Kidney (tissue), 22 donors: ENCODE measurements at regions of chr9 and their contacts with region 1.

Region 1: GRCh38 chr9:5892456-5893133 is 1.9 kb downstream of the MLANA start:
- DNase-seq: peak in 3 of 5 donors; percentile 65 to 87 (median 86)
- H3K4me3 ChIP-seq: no peak overlapping the region
- H3K27ac ChIP-seq: no peak overlapping the region
- H3K4me1 ChIP-seq: peaks cover 0 to 3% (median 0%) of the 10 kb centered on the region in 3 donors
- H3K27me3 ChIP-seq: no peaks in the 10 kb centered on the region
- CTCF ChIP-seq: no peak

Region 2: GRCh38 chr9:6055213-6055612 is 162.6 kb after region 1 on chr9:
- intact Hi-C with region 1: loop called (anchors 5 kb)
- DNase-seq: peak in 3 of 5 donors; percentile 49 to 85 (median 76)
- H3K4me3 ChIP-seq: no peak overlapping the region
- H3K27ac ChIP-seq: no peak overlapping the region
- H3K4me1 ChIP-seq: no peaks in the 10 kb centered on the region
- H3K27me3 ChIP-seq: no peaks in the 10 kb centered on the region
- CTCF ChIP-seq: peak; percentile 61

Region 3: DNA sequence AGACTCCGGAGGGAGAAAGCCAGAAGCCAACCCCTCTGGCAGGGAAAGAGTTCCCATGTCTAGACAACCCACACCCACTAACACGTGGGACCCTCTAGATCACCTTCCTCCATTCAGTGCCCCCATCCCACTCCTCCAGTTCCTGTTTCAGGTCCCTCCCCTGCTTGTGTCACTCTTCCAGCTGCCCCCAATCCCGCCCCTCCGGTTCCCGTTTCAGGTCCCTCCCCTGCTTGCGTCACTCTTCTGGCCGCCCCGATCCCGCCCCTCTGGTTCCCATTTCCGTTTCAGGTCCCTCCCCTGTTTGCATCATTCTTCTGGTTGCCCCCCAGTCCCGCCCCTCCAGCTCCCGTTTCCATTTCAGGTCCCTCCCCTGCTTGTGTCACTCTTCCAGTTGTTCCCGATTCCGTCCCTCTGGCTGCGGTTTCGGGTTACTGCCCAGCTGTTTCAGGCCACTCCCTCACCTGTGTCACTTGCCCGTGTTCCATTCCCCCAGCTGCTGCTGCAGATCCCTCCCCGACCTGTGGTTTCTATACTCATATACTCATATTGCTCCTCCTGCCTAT is 187.6 kb after region 1 on chr9:
- intact Hi-C with region 1: no loop called
- DNase-seq: peak; percentile 96 to 98 (median 97)
- H3K4me3 ChIP-seq: peak overlapping the region; percentile 82 to 90 (median 86)
- H3K27ac ChIP-seq: peak overlapping the region in 1 of 2 donors; percentile 57
- H3K4me1 ChIP-seq: no peaks in the 10 kb centered on the region
- H3K27me3 ChIP-seq: no peaks in the 10 kb centered on the region
- CTCF ChIP-seq: peak; percentile 14